Dendritic cell treated with granulocyte-macrophage colony-stimulating factor and Interleukin-4, amounts not matched to agents 40 ng/mL and 50 ng/mL, for 4 days (primary cell): ENCODE measurements at regions of chr3 and their contacts with region 1.

Region 1: GRCh38 chr3:105366326-105367062 is at the start of gene ALCAM:
- H3K4me3 Mint-ChIP-seq: peak within 1 kb of the TSS; percentile 87
- H3K27ac Mint-ChIP-seq: peak within 1 kb of the TSS; percentile 99
- H3K4me1 Mint-ChIP-seq: peaks cover 48% of the 10 kb centered on the region
- H3K27me3 Mint-ChIP-seq: no peaks in the 10 kb centered on the region

Region 2: GRCh38 chr3:104273046-104273649 is 1093.3 kb before region 1 on chr3:
- intact Hi-C with region 1: loop called (anchors 10 kb)
- H3K4me3 Mint-ChIP-seq: no peak overlapping the region
- H3K27ac Mint-ChIP-seq: no peak overlapping the region
- H3K4me1 Mint-ChIP-seq: no peaks in the 10 kb centered on the region
- H3K27me3 Mint-ChIP-seq: no peaks in the 10 kb centered on the region

Region 3: DNA sequence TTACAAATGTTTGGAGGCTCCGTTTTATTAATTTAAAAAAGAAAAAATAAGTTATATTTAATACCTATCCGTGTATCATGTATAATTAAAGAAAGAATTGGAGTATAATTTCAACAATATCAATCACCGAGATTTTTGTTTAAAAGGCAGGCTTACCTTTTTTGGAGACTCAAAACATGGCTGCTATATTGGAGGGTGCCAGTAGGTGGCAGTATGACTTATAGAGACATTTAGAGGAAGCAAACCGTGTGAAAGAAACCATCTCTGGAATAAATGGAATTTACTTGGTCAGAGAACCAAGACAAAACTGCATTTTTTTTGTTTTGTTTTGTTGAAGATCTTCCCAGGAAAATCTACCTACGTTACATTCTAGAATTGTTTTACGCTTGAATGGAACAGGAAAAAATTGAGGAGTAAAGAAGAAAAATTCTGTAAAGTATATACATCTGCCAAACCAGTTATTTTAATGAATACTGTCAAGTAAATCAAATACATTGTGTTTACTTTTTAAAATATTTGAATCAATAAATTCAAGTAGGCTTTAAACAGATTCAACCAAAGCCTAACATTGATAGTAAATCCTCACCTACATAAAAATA is 802.4 kb before region 1 on chr3:
- intact Hi-C with region 1: loop called (anchors 1 kb)
- H3K4me3 Mint-ChIP-seq: no peak overlapping the region
- H3K27ac Mint-ChIP-seq: no peak overlapping the region
- H3K4me1 Mint-ChIP-seq: no peaks in the 10 kb centered on the region
- H3K27me3 Mint-ChIP-seq: no peaks in the 10 kb centered on the region

Region 4: DNA sequence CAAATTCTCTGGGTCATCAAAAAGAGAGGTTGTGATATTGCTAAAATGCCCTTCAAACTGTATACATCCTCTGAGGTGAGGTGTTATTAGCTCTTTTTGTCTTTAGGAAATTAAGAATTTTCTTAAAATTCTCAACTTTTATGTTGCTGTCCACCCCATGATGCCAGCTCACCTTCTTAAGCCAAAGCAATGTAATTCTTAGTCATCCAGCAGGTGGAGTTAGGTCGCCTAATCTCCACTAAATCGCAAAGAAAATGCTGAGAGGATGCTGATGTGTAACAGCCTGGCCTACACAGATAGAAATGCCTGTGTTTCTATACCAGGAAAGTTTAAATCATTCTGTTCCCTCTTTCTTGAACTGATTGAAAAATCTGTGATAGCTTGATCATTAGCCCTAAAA is 769.9 kb before region 1 on chr3:
- intact Hi-C with region 1: loop called (anchors 10 kb)
- H3K4me3 Mint-ChIP-seq: no peak overlapping the region
- H3K27ac Mint-ChIP-seq: no peak overlapping the region
- H3K4me1 Mint-ChIP-seq: peaks cover 6% of the 10 kb centered on the region
- H3K27me3 Mint-ChIP-seq: no peaks in the 10 kb centered on the region

Region 5: DNA sequence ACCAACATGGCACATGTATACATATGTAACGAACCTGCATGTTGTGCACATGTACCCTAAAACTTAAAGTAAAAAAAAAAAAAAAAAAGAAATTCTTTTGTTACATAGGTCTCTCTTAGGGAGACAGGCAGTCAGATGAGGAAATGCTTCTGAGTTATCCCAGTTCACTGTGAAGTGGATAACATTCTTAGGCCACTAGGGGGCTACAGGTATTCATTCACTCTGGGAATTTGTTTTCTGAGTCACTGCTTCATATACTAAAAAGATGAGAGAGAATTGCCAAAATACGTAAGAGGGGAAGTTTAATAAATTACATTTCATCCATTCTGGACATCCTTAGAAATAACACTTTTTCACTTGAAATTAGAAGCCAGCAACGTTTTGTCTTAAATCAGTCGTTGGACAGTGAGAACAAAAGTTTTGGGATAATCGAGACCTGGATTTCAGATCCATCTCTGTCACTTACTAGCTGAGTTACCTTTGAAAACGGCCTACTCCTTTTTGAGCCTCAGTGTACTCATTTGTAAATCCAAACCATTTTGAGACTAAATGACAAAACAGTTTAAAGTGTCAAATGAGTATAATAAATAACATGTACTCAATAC is 738.2 kb before region 1 on chr3:
- intact Hi-C with region 1: loop called (anchors 10 kb)
- H3K4me3 Mint-ChIP-seq: no peak overlapping the region
- H3K27ac Mint-ChIP-seq: no peak overlapping the region
- H3K4me1 Mint-ChIP-seq: no peaks in the 10 kb centered on the region
- H3K27me3 Mint-ChIP-seq: no peaks in the 10 kb centered on the region

Region 6: DNA sequence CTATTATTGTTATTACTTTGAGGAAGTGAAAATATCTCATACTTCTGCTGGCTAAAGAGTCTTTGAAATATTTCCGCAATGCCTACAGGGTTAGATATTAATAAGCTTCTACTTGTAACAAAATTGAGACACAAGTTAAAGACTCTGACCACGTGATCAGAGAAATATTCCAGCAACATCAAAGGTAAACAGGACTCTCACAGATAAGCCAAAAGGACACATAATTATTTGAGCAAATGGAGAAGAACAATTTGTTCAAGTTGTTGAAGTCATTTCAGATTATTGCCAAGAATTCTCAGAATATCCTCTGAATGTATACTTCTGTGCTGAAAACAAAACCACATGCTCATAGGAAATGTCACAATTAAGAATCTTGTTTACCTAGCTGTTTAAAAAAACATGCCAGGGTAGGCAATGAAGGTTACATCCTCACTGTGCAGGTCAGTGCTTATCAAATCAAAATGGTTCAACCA is 225.6 kb before region 1 on chr3:
- intact Hi-C with region 1: loop called (anchors 5 kb)
- H3K4me3 Mint-ChIP-seq: no peak overlapping the region
- H3K27ac Mint-ChIP-seq: peak overlapping the region; percentile 45
- H3K4me1 Mint-ChIP-seq: peaks cover 23% of the 10 kb centered on the region
- H3K27me3 Mint-ChIP-seq: no peaks in the 10 kb centered on the region

Region 7: DNA sequence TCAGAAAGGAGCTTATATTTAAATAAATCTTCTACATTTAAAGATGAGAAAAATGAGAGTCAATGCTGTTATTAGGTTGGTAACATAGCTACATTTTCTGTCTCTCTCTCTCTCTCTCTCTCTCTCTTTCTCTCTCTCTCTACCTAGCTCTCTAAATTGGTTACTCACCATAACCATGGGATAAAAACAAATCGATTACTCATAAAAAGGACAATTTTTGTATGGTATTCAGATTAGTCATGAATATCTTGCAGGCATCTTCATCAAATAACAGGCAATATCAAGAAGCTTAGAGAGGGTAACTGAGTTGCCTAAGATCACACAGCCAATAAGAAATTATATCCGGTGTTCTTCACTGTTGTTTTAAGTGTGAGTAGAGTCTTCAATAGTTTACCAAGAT is 81.6 kb before region 1 on chr3:
- intact Hi-C with region 1: no loop called
- H3K4me3 Mint-ChIP-seq: no peak overlapping the region
- H3K27ac Mint-ChIP-seq: no peak overlapping the region
- H3K4me1 Mint-ChIP-seq: no peaks in the 10 kb centered on the region
- H3K27me3 Mint-ChIP-seq: peaks cover 3% of the 10 kb centered on the region

Region 8: DNA sequence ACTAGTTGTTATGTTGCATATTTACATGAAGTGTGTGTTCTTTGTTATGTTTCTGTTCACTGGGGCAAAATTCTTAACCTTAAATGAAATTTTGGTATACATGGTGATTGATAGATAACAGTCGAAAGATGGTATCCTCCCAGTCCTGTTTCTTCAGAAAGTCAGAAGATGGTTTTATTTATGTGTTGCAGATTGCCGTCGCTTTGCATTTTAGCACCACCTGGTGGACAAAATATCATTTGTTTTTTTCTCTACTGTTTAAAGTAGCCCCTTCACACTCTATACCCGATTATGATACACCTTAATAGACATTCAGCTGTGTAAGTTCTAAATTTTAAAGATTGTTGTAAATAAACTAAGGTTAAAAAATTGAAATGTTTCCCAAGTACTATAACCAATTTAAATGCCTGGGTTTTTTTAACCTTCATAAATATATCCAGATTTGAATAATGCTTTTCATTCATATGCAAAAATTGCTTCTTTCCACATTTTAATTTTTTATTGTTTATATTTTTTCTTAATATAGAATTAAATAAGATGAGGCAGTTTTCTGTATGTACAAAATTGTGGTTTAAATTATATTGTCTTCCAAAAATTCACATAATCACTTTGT is 152.4 kb after region 1 on chr3:
- intact Hi-C with region 1: loop called (anchors 2 kb)
- H3K4me3 Mint-ChIP-seq: no peak overlapping the region
- H3K27ac Mint-ChIP-seq: no peak overlapping the region
- H3K4me1 Mint-ChIP-seq: no peaks in the 10 kb centered on the region
- H3K27me3 Mint-ChIP-seq: no peaks in the 10 kb centered on the region